Activated CD8-positive, alpha-beta memory T cell treated with anti-CD3 and anti-CD28 coated beads, Interleukin-2, amount 10 ng/mL, durations not matched to agents 7 days and 5 days (primary cell): ENCODE measurements at regions of chr9 and their contacts with region 1.

Region 1: DNA sequence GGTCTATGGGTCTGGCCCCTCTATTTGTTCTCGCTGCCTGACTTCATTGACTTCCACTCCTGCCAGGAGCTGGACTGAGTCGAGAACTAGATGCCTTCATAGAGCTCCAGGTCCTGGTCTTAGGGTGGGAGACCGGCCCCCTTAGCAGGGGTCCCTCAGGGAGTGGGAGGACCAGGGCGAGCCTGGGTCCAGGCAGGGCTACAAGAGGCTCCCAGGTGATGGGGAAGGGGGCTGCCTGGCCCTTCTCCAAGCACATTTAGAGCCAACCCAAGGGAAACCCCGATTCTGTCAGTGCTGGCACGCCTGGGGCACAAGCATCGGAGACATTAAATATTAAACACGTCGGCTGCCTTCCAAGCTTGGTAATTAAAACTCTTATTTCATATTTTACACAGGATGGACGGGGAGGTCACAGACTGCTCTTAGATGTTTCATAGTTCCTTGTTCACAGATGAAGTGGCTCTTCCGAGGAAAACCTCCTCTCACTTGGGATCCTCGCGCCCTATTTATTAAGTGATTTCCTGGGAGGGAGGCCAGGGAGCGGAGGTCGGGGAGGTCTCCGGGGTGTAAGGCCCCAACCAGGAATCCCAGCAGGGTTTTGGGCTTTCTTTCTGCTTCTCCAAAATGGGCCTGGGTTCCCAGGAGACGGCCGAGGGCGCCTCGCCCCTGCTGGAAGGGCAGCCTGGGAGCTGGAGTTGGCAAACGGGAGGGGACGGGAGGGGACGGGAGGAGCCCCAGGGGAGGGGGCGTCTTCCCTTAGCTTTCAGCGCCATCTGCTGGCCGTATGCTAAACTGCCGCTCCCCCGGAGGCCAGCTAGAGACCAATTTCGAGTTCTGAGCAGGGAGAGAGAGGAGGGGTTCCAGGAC is 23.4 kb upstream of the ZBTB43 start:
- DNase-seq: peak; percentile 85
- ATAC-seq: peak; percentile 87
- H3K4me3 Mint-ChIP-seq: no peak overlapping the region
- H3K27ac Mint-ChIP-seq: no peak overlapping the region
- H3K4me1 Mint-ChIP-seq: peaks cover 3% of the 10 kb centered on the region
- H3K27me3 Mint-ChIP-seq: peaks cover 13% of the 10 kb centered on the region

Region 2: DNA sequence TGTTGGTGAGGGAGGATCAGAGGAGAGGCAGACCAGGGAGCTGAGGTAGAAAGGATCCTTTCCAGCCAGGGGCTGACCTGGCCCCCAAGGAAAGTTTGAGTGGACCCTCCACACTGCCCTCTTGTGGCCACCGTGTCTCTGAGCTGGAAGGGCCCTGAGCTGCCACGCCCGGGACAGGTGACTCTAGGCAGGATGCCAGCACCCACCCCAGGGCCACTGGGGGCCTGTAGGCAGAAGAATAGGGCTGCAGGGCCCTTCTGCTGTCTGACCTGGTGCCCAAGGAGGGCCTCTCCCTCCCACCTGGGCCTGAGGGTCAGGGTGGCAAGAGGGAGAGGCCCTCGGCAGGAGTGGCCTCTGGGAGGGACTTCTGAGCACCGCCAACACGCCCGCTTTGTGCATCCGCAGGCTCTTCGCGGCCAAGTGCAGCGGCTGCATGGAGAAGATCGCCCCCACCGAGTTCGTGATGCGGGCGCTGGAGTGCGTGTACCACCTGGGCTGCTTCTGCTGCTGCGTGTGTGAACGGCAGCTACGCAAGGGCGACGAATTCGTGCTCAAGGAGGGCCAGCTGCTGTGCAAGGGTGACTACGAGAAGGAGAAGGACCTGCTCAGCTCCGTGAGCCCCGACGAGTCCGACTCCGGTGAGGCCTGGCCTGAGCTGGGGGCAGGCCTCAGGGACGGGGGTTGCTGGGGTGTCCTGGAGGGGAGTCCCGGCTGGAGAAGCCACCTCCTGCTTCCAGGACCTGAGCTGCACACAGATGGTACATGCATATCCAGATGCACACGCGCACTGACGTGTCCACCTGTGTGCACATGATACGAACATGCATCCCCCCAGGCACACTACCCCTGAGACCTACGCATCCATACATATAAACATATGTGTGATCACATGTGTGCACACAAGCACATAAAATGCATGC is 90.7 kb before region 1 on chr9:
- CTCF ChIA-PET with region 1: interaction called, 19 read pairs
- DNase-seq: peak; percentile 71
- ATAC-seq: peak; percentile 79
- H3K4me3 Mint-ChIP-seq: no peak overlapping the region
- H3K27ac Mint-ChIP-seq: no peak overlapping the region
- H3K4me1 Mint-ChIP-seq: no peaks in the 10 kb centered on the region
- H3K27me3 Mint-ChIP-seq: peaks cover 21% of the 10 kb centered on the region

Region 3: DNA sequence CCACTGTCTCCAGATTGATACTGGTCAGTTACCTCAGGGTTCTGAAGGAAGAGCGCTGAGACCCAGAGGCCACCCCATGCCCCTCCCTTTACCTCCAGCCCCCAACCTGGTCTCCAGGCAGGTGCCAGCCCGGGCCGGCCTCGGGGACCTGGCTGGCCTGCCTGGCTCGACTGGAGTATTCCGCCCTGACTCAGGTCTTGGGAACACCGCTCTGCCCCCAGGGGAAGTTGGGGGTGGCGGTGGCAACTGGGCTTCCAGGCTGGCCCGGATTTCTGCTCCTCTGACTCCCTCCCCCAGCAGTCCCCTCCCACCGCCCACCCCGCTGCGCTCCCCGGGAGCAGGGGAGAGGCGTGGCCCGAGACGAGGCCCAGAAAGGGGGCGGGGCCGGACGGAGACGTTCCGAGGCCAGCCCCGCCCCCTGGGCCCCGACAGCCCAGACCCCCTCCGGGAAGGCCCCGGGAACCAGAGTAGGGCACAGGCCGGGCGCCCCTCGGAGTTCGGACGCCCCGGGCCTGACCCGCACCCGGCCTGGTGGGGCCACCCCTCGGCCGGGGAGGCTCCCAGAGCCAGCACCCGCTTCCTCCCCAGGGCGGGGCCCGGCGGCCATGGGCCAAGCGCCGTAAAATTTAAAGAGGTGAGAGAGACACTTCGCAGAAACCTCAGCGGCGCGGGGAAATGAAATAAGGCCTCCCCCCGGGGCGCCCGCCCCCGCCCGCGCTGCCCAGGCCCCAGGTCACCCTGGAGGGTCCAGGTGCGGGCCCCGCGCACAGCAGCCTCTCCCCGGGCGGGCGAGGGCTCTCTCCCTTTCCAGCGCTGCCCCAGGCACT is 59.0 kb before region 1 on chr9:
- CTCF ChIA-PET with region 1: interaction called, 18 read pairs
- DNase-seq: peak; percentile 91
- ATAC-seq: peak; percentile 70
- H3K4me3 Mint-ChIP-seq: peak overlapping the region; percentile 78
- H3K27ac Mint-ChIP-seq: peak overlapping the region; percentile 94
- H3K4me1 Mint-ChIP-seq: peaks cover 40% of the 10 kb centered on the region
- H3K27me3 Mint-ChIP-seq: peaks cover 14% of the 10 kb centered on the region

Region 4: GRCh38 chr9:126756876-126757415 is 24.5 kb before region 1 on chr9:
- CTCF ChIA-PET with region 1: interaction called, 13 read pairs
- DNase-seq: no peak
- ATAC-seq: no peak
- H3K4me3 Mint-ChIP-seq: no peak overlapping the region
- H3K27ac Mint-ChIP-seq: no peak overlapping the region
- H3K4me1 Mint-ChIP-seq: no peaks in the 10 kb centered on the region
- H3K27me3 Mint-ChIP-seq: peaks cover 9% of the 10 kb centered on the region

Region 5: GRCh38 chr9:126791406-126792151 is 10.2 kb after region 1 on chr9:
- CTCF ChIA-PET with region 1: interaction called, 13 read pairs
- DNase-seq: no peak
- ATAC-seq: no peak
- H3K4me3 Mint-ChIP-seq: no peak overlapping the region
- H3K27ac Mint-ChIP-seq: no peak overlapping the region
- H3K4me1 Mint-ChIP-seq: peaks cover 10% of the 10 kb centered on the region
- H3K27me3 Mint-ChIP-seq: peaks cover 64% of the 10 kb centered on the region

Region 6: GRCh38 chr9:127004946-127005769 is 223.7 kb after region 1 on chr9:
- CTCF ChIA-PET with region 1: no interaction called
- DNase-seq: peak; percentile 89
- ATAC-seq: peak; percentile 99
- H3K4me3 Mint-ChIP-seq: no peak overlapping the region
- H3K27ac Mint-ChIP-seq: peak overlapping the region; percentile 84
- H3K4me1 Mint-ChIP-seq: peaks cover 30% of the 10 kb centered on the region
- H3K27me3 Mint-ChIP-seq: peaks cover under 1% of the 10 kb centered on the region

Region 7: DNA sequence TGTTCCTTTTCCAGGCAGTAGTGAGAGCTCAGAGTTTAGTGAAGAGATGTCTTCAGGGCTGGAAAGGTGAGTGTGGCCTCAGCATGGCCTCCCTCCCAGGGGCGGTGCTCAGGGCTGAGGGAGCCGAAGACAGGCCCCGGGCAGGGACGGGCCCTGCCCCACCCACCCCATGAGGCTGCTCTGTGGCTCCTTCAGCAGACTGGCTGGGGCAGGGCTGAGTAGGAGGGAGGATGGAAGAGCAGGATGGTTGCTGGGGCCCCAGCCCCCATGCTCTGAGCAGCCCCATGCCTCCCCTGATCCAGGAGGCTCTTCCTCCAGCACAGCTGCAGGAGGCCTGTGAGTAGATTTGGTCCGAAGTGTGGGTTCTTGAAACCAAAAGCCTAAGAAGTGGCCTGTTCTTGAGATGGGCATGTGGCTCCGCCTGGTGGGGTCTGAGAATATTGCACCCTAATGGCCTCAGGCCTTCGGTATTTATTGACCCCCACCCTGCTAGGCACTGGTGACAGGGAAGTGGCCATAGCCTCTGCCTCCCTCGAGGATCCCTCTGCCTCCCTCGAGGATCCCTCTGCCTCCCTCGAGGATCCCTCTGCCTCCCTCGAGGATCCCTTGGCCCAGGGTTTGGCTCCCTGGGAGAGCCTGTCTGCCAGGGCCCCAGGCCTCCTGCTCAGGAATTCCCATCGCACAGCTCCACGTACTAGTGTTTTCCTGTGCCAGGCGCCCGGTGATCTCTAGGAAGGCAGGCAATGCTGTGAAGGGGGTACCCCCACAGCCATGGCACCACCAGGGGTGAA is 417.8 kb after region 1 on chr9:
- CTCF ChIA-PET with region 1: no interaction called
- DNase-seq: peak; percentile 85
- ATAC-seq: peak; percentile 79
- H3K4me3 Mint-ChIP-seq: no peak overlapping the region
- H3K27ac Mint-ChIP-seq: no peak overlapping the region
- H3K4me1 Mint-ChIP-seq: peaks cover 5% of the 10 kb centered on the region
- H3K27me3 Mint-ChIP-seq: no peaks in the 10 kb centered on the region